Heart right ventricle (tissue), 16 donors: ENCODE measurements at regions of chr11 and their contacts with region 1.

Region 1: GRCh38 chr11:95459291-95460042 is 228.5 kb upstream of the SESN3 start:
- DNase-seq: no peak
- ATAC-seq: peak in 7 of 8 donors; percentile 48 to 82 (median 72)
- H3K4me3 ChIP-seq: no peak overlapping the region
- H3K27ac ChIP-seq: peak overlapping the region in 5 of 10 donors; percentile 12 to 49 (median 41)
- H3K4me1 ChIP-seq: peaks cover 0 to 16% (median 9%) of the 10 kb centered on the region in 9 donors
- H3K27me3 ChIP-seq: no peaks in the 10 kb centered on the region
- CTCF ChIP-seq: no peak

Region 2: GRCh38 chr11:95505927-95506426 is 46.5 kb after region 1 on chr11:
- intact Hi-C with region 1: loop called in 1 of 10 experiments (anchors 5 kb)
- DNase-seq: no peak
- ATAC-seq: no peak
- H3K4me3 ChIP-seq: no peak overlapping the region
- H3K27ac ChIP-seq: no peak overlapping the region
- H3K4me1 ChIP-seq: peaks cover 0 to 10% (median 0%) of the 10 kb centered on the region in 9 donors
- H3K27me3 ChIP-seq: peaks cover 0 to 4% (median 0%) of the 10 kb centered on the region in 7 donors
- CTCF ChIP-seq: no peak

Region 3: DNA sequence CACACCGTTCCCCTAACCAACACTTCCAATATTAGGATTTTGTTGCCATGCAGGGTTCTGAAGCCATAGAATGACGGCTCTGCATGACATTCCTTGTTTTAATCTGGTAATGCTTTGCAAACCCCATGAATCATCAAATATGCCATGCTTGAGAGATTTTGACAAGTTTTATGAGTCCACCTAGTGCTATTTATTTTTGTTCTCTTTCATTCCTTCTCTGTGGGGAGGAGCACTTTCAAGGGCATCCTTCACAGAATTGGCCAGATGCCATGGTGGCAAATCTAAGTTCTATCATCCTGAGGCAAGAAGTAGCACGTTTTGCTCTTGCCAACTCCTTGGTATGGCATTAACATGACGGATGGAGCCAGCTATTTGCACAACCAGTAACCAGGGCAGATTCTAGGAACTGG is 61.7 kb after region 1 on chr11:
- intact Hi-C with region 1: no loop called
- DNase-seq: no peak
- ATAC-seq: no peak
- H3K4me3 ChIP-seq: no peak overlapping the region
- H3K27ac ChIP-seq: no peak overlapping the region
- H3K4me1 ChIP-seq: peaks cover 0 to 3% (median 0%) of the 10 kb centered on the region in 9 donors
- H3K27me3 ChIP-seq: no peaks in the 10 kb centered on the region
- CTCF ChIP-seq: no peak